ENCODE measurements at regions of chr11 and their contacts with region 1.

Region 1: DNA sequence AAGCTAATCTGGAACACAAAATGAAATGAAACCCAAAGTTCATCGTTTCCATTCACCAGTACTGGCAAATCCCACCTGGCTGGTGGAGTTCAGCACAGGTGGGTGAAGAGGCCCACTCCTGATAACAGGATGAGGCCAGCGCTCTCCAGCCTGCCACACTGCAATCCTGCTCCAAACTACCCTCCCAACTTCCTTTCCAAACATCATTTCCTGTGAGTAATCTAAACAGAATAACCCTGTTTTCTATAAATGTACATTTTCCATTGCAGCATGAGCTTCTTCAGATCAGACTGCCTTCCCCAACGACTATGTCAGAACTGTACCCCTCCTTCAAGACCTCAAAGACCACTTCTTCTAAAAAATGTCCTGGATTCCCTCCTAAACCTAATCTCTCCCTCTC is 15.9 kb upstream of the NFRKB start:
- DNase-seq: no peak
- ATAC-seq: no peak
- H3K4me3 ChIP-seq: no peak overlapping the region
- H3K27ac ChIP-seq: no peak overlapping the region
- H3K4me1 ChIP-seq: no peaks in the 10 kb centered on the region
- H3K27me3 ChIP-seq: no peaks in the 10 kb centered on the region
- CTCF ChIP-seq: no peak
- EP300 ChIP-seq: no peak
- POLR2A ChIP-seq: no peak
- RAD21 ChIP-seq: no peak

Region 2: DNA sequence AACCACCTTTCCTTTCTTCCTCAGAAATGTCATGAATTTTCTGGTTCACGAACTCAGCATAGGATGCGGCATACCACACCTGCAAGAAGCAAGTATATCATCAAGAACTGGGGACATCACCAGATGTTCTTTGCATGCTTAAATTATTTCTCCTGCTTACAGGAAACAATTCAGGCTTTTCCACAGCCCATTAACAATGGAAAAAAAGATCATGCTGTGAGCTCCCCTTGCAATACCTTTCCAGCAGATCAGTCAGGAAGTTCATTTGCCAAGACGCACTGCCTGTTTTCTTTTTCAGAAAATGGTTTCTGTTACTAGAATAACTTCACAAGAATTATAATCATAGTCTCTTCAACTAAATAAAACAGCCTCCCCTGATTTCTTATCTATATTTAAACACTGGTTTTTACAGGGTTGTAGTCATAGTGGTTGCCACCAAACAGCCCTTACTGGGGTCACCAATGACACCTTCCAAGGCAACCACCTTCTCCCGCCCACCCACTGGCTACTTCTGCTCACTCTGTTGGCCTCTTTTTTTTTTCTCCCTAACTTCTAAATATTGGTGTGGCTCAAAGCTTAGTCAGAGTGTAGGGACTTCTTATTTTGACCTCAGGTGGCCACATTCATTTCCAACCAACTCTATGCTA is 26.4 kb after region 1 on chr11:
- CTCF ChIA-PET with region 1: no interaction called
- POLR2A ChIA-PET with region 1: no interaction called
- in situ Hi-C with region 1: no loop called
- intact Hi-C with region 1: loop called (anchors 1 kb)
- DNase-seq: no peak
- ATAC-seq: no peak
- H3K4me3 ChIP-seq: no peak overlapping the region
- H3K27ac ChIP-seq: no peak overlapping the region
- H3K4me1 ChIP-seq: peaks cover 5% of the 10 kb centered on the region
- H3K27me3 ChIP-seq: no peaks in the 10 kb centered on the region
- CTCF ChIP-seq: no peak
- EP300 ChIP-seq: no peak
- POLR2A ChIP-seq: no peak
- RAD21 ChIP-seq: no peak

Measured in HepG2 (cell line).